PC-3 (cell line): ENCODE measurements at regions of chr3 and their contacts with region 1.

Region 1: DNA sequence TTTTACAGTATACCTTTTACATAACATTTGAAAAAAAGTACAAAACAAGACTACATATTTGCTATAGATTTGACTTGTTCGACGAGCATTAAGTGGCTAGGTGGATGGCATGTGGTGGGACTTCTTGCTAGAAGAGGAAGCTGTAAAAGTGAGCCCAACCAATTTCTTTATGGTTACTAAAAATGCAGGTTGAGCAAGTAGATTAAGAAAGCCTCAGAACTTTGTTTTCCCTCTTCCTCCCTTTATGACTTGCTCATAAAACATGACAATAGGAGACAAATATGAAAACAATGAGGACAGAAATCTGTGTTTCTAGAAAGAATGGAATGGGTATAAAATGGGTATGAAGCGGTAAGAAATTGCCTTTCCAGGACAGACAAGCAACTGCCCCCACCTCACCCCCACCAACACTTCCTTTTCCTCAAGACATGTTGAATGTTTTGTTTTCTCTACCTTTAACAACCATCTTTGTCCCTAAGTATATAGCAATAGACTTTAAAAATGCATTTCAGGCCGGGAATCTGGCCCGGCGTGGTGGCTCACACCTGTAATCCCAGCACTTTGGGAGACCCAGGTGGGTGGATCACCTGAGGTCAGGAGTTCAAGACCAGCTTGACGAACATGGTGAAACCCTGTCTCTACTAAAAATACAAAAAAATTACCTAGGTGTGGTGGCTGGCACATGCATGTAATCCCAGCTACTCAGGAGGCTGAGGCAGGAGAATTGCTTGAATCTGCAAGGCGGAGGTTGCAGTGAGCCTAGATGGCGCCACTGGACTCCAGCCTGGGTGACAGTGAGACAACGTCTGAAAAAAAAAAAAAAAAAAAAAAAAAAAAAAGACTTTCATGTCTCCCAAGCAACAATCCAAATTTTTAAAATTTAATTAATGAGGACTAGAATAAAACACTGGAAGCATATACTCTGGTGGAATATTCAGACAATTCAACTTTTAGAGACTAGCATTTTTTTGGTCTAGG is 49.7 kb upstream of the CCR4 start:
- DNase-seq: peak; percentile 58
- ATAC-seq: peak; percentile 52
- H3K4me3 ChIP-seq: peak overlapping the region; percentile 57
- H3K27ac ChIP-seq: no peak overlapping the region
- H3K4me1 ChIP-seq: peaks cover 9% of the 10 kb centered on the region; the same call in 1 of the 2 replicates
- H3K27me3 ChIP-seq: no peaks in the 10 kb centered on the region
- CTCF ChIP-seq: peak; percentile 64

Region 2: DNA sequence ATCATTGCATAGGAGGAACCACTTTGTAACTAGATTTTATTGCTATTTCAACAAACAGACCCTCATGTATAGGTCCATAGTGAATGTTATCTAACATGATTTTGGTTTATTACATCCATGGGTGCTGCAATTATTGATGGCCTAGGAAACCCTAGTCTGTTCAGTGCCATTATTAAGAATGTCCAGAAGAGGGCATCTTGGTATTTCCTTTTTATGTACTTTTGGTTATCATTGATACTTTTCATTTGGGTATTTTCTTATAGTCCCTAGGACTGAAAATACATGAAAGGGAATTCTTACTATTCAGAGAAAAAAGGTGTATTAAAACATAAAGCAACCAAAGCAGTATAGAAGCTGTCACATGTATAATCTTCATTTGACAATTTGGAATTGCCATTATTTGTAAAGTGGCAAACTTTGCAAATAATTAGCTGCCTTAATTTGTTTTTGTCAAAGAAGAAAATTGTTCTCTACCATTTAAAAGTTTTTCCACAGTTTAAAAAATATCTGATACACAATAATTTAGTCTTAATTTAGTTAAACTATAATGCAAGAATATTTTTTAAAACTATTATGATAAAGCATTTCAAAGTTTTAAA is 168.0 kb before region 1 on chr3:
- CTCF ChIA-PET with region 1: interaction called, 6 read pairs
- POLR2A ChIA-PET with region 1: no interaction called
- intact Hi-C with region 1: loop called (anchors 1 kb)
- DNase-seq: peak; percentile 62
- ATAC-seq: peak; percentile 73
- H3K4me3 ChIP-seq: no peak overlapping the region
- H3K27ac ChIP-seq: no peak overlapping the region
- H3K4me1 ChIP-seq: no peaks in the 10 kb centered on the region
- H3K27me3 ChIP-seq: no peaks in the 10 kb centered on the region
- CTCF ChIP-seq: peak; percentile 81

Region 3: DNA sequence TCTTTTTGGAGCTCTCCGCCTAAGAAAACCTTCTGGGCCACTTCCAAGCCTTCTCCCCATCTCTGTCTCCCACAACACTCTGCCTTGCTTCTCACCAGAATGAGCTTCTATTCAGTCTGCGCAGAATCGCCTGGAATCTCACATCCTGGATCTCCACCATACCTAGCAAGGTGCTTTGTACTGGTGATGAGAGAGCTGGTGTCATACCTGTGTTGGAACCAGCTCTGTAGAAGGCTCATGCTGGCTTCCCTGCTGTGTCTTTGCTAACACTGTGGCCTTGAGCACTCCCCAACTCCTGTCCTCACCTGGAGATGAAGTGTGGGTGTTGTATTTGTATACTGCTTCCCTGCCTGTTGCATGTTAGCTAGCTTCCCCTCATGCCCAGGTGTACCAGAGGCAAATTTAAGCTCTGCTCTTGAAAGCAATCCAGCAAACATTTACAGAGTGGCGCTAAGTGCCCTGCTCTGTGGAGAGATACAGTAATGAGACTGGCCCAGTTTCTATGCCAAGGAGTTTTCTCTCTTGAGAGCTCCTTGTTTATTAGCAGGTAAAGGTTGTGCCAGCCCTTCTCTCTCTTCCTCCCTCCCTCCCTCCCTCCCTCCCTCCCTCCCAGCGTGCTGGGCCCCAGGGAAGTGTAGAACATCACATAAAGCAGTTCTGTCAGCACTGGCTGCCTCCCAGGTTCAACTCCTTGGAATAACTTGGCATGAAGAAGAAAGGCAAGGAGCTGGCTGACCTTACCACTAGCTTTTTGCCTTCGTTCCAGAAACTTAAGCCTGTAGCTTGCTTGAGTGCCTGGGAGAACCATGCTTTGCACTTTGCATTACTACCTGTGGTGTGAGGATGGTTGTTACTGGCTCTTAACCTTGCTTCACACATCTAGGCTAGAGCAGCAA is 29.0 kb before region 1 on chr3:
- CTCF ChIA-PET with region 1: interaction called, 16 read pairs
- POLR2A ChIA-PET with region 1: no interaction called
- intact Hi-C with region 1: loop called (anchors 2 kb)
- DNase-seq: peak; percentile 60
- ATAC-seq: peak; percentile 52
- H3K4me3 ChIP-seq: no peak overlapping the region
- H3K27ac ChIP-seq: no peak overlapping the region
- H3K4me1 ChIP-seq: peaks cover 33% of the 10 kb centered on the region
- H3K27me3 ChIP-seq: no peaks in the 10 kb centered on the region
- CTCF ChIP-seq: no peak